AG04450 (cell line): ENCODE measurements at regions of chr1 and their contacts with region 1.

Region 1: DNA sequence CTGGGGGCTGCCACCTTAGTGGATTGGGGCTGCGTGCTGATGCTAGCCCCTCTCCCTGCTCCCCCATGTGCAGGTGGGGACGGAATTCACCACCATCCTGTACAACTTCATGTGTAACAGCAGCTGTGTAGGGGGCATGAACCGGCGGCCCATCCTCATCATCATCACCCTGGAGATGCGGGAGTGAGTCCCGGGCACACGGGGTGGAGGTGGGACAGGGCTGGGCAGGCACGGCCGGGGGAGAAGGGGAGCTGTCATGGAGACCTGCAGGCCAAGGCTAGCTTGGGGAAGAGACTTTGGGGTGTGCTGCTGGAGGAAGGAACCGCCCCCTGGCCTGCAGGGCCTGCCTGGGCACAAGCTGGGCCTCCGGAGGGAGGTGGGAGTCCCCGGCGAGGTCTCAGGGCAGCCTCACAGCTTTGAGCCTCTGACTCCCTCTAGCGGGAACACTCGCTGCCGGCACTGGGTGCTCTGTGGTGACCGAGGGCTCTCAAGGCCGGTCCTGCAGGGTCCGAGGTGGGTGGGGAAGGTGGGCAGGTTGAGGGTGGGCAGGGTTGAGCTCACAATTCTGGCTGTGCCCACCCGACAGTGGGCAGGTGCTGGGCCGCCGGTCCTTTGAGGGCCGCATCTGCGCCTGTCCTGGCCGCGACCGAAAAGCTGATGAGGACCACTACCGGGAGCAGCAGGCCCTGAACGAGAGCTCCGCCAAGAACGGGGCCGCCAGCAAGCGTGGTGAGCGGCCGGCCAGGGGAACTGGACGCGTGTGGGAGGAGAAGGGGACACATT is 25.0 kb upstream of the CCDC27 start:
- DNase-seq: no peak
- H3K4me3 ChIP-seq: no peak overlapping the region
- H3K27ac ChIP-seq: no peak overlapping the region
- H3K27me3 ChIP-seq: peaks cover 3% of the 10 kb centered on the region
- CTCF ChIP-seq: peak; percentile 40

Region 2: DNA sequence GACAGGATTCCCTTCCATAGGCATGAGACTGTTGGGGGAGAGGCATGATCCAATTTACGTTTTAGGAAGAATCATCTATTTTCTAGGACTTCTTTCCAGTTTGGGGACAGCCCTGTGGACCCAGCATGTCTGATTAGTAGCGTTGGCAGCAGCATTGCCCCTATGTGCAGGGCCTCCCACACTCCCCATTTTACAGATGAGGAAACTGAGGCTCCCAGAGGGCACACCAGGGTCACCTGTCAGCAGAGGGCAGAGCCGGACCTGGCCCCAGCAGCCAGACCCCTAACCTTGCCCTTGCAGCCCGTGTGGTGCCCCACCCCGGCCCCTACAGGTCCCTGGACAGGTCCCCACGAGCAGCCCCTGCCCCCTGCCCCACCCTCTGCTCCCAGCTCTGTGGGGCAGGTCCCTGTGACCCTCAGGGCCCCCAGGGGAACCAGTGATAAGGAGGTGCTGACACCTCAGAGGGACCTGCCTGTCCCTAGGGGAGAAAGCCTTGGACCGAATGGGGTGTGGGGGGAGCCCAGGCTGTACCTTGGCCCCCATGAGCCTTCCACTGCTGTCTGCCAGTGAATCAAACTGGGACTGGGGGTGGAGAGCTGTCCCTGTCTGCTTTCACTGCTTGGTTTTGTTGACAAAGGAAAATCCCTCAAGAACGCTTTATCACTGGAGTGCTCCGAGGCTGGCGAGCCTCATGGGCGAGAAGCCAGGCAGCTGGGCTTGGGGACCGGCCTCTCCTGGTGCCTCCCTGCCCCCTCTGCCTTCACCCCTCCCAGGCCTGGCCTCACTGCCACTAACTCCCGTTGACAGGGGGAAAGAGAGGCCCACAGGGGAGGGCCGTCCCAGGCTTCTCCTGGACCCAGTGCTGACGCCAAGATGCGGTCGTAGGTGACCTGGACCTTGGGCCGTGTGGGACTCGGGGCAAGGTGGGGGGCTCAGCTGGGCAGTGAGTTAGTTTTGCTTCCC is 14.4 kb before region 1 on chr1:
- CTCF ChIA-PET with region 1: interaction called, 21 read pairs
- POLR2A ChIA-PET with region 1: no interaction called
- DNase-seq: no peak
- H3K4me3 ChIP-seq: no peak overlapping the region
- H3K27ac ChIP-seq: no peak overlapping the region
- H3K27me3 ChIP-seq: peaks cover 35% of the 10 kb centered on the region
- CTCF ChIP-seq: no peak

Region 3: GRCh38 chr1:3772027-3772714 is 44.9 kb after region 1 on chr1:
- CTCF ChIA-PET with region 1: interaction called, 10 read pairs
- POLR2A ChIA-PET with region 1: no interaction called
- DNase-seq: peak; percentile 38
- H3K4me3 ChIP-seq: peak overlapping the region; percentile 67
- H3K27ac ChIP-seq: no peak overlapping the region
- H3K27me3 ChIP-seq: peaks cover 3% of the 10 kb centered on the region
- CTCF ChIP-seq: no peak

Region 4: GRCh38 chr1:3869751-3870301 is 142.6 kb after region 1 on chr1:
- CTCF ChIA-PET with region 1: no interaction called
- POLR2A ChIA-PET with region 1: no interaction called
- DNase-seq: no peak
- H3K4me3 ChIP-seq: no peak overlapping the region
- H3K27ac ChIP-seq: no peak overlapping the region
- H3K27me3 ChIP-seq: no peaks in the 10 kb centered on the region
- CTCF ChIP-seq: no peak